ENCODE measurements at regions of chr9 and their contacts with region 1.

Region 1: DNA sequence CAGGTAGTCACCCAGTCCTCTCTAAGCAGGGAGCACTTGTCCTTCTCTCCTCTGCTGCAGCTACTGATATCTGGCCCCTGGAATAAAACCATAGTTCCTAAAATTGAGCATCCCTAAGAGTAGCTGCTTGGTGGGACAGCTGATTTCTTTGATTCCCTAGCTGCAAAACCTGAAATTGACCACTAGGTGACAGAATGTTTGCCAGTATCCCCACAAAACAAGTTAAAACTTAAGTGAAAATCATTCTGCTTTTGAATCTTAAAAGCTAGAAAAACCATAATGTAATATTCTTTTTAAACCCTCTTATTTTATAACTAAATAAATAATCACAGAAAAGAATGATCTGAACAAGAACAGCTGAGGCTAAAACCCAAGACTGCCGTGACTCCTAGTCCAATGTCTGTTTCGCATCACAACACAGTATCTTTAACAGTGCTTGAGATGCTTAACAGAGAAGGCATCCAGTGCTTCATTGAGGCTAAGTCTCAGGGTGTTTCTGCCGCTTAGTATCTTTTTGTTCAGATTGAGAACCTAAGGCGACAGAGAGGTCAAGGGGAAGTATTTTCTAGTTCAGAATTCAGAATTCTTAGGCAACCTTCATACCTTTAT is 24.4 kb upstream of the TAL2 start:
- DNase-seq: no peak
- ATAC-seq: no peak
- H3K4me3 Mint-ChIP-seq: no peak overlapping the region
- H3K27ac Mint-ChIP-seq: no peak overlapping the region
- H3K4me1 Mint-ChIP-seq: no peaks in the 10 kb centered on the region
- H3K27me3 Mint-ChIP-seq: no peaks in the 10 kb centered on the region

Region 2: DNA sequence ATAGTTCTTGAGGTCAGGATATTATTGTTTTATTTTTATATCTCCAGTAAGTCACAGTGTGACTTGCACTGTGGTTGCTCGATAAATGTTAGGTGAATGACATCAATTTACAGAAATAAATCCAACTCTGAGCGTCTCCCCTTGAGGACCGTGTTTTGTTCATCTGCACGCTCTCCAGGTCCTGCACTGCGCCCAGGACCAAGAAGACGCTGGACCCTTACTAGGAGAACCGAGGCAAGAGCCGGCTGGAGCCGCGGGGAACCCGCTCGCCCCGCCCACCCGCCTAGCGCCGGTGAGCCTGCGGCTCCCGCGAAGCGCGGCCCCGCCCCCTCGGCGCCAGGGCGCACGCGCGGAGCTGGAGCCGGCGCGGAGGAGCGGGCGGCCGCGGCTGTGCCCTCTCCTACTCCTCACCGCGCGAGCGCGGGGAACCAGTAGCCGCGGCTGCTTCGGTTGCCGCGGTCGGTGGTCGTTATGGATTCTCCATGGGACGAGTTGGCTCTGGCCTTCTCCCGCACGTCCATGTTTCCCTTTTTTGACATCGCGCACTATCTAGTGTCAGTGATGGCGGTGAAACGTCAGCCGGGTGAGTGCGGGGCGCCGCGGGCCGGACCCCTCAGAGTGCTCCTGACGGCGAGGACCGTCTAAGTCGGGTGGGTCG is 56.4 kb after region 1 on chr9 and contains the start of gene TMEM38B:
- CTCF ChIA-PET with region 1: no interaction called
- POLR2A ChIA-PET with region 1: no interaction called
- intact Hi-C with region 1: no loop called
- DNase-seq: peak; percentile 88
- ATAC-seq: peak; percentile 85
- H3K4me3 Mint-ChIP-seq: peak within 1 kb of the TSS; percentile 76
- H3K27ac Mint-ChIP-seq: peak within 1 kb of the TSS; percentile 86
- H3K4me1 Mint-ChIP-seq: peaks cover 27% of the 10 kb centered on the region
- H3K27me3 Mint-ChIP-seq: peaks cover 15% of the 10 kb centered on the region
- total RNA-seq, gene TMEM38B: 14.5 to 24.8 TPM

Region 3: GRCh38 chr9:105712773-105713172 is 74.9 kb after region 1 on chr9:
- CTCF ChIA-PET with region 1: interaction called, 14 read pairs
- POLR2A ChIA-PET with region 1: no interaction called
- intact Hi-C with region 1: no loop called
- DNase-seq: no peak
- ATAC-seq: no peak
- H3K4me3 Mint-ChIP-seq: no peak overlapping the region
- H3K27ac Mint-ChIP-seq: no peak overlapping the region
- H3K4me1 Mint-ChIP-seq: peaks cover 8% of the 10 kb centered on the region
- H3K27me3 Mint-ChIP-seq: no peaks in the 10 kb centered on the region